Calu3 (cell line): ENCODE measurements at regions of chr12 and their contacts with region 1.

Region 1: DNA sequence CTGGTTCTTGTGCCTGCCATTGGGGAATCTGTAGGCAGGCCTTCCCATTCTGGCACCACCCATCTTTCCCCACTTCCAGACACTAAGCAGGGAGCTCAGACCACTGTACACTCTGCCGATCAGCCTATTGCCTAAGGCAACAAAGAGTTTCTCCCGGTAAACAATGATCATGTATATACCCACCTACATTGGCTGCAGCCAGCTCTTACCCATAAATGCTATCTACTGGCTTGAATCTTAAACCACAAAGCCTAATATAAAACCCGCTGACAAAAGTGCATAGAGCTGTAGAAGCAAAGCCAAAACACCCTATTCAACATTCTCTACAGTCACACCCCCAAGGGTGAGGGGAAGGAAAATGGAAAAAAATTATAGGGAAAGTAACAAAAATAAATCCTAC is 20.8 kb upstream of the GLIPR1 start:
- DNase-seq: no peak
- H3K4me3 Mint-ChIP-seq: no peak overlapping the region
- H3K27ac Mint-ChIP-seq: peak overlapping the region; percentile 50
- H3K4me1 Mint-ChIP-seq: peaks cover 49% of the 10 kb centered on the region
- H3K27me3 Mint-ChIP-seq: no peaks in the 10 kb centered on the region
- CTCF ChIP-seq: no peak

Region 2: DNA sequence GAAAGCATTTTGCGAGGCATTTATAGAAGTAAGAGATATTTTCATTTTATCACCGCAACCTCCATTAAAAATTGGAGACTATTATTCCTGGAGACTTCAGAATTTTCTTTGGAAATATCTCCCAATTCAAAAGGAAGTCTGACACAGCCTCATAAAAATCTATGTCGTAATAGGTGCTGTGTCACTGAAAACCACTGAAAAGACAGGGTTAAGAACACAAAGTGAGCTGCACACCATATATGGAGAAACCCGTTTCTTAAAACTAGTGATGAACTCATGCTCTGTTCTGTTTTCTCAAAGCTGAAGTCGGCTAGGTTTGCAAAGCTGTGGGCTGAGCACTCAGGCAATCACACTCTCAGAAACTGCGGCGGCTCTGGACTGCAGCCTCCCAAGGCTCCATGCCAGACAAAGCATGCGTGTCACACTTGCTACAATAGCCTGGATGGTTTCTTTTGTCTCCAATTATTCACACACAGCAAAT is 20.8 kb after region 1 on chr12 and contains the start of gene GLIPR1:
- CTCF ChIA-PET with region 1: interaction called, 6 read pairs
- intact Hi-C with region 1: loop called (anchors 2 kb)
- DNase-seq: peak; percentile 55
- H3K4me3 Mint-ChIP-seq: peak within 1 kb of the TSS; percentile 29
- H3K27ac Mint-ChIP-seq: peak within 1 kb of the TSS; percentile 83
- H3K4me1 Mint-ChIP-seq: peaks cover 39% of the 10 kb centered on the region
- H3K27me3 Mint-ChIP-seq: no peaks in the 10 kb centered on the region
- CTCF ChIP-seq: no peak
- total RNA-seq, gene GLIPR1: 27.7 and 38.5 TPM in 2 replicates

Region 3: GRCh38 chr12:75585330-75585729 is 125.6 kb after region 1 on chr12:
- CTCF ChIA-PET with region 1: no interaction called
- intact Hi-C with region 1: no loop called
- DNase-seq: no peak
- H3K4me3 Mint-ChIP-seq: no peak overlapping the region
- H3K27ac Mint-ChIP-seq: no peak overlapping the region
- H3K4me1 Mint-ChIP-seq: peaks cover 13% of the 10 kb centered on the region
- H3K27me3 Mint-ChIP-seq: no peaks in the 10 kb centered on the region
- CTCF ChIP-seq: no peak